CD8-positive, alpha-beta memory T cell (primary cell): ENCODE measurements at regions of chr4 and their contacts with region 1.

Region 1: DNA sequence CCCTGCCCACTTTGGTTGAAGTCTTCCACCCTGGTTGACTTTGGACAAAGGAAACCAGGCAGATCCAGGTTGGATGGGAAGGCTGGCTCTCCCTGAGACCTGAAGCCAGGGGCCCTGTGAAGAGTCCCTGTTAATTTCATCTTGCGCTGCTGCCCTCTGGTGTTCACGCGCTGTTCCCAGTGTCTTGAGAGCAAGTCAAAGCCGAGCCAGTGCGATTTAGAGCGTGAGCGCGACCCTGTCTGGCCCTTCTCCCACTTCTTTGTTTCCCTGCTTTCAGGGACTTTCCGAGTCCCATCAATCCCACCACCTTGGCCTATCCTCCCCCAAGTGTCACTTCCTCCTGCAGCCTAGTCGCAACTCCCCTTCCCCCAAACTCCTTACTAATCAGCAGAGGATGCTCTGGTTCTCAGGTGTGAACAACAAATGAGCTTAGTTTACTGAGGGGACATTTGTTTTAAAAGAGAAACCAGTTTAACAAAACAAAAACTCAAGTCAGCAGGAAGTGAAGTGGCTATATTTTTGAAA is 25.8 kb upstream of the CHRNA9 start:
- DNase-seq: peak; percentile 84 to 93 (median 87)
- H3K4me3 ChIP-seq: peak overlapping the region; percentile 46
- H3K4me3 Mint-ChIP-seq: peak overlapping the region; percentile 71 to 88 (median 81)
- H3K27ac ChIP-seq: peak overlapping the region; percentile 62
- H3K27ac Mint-ChIP-seq: peak overlapping the region; percentile 94 to 99 (median 98)
- H3K4me1 ChIP-seq: peaks cover 79% of the 10 kb centered on the region
- H3K4me1 Mint-ChIP-seq: peaks cover 57 to 85% (median 64%) of the 10 kb centered on the region in 3 donors
- H3K27me3 ChIP-seq: no peaks in the 10 kb centered on the region
- H3K27me3 Mint-ChIP-seq: peaks cover 0 to 2% of the 10 kb centered on the region in 2 donors

Region 2: DNA sequence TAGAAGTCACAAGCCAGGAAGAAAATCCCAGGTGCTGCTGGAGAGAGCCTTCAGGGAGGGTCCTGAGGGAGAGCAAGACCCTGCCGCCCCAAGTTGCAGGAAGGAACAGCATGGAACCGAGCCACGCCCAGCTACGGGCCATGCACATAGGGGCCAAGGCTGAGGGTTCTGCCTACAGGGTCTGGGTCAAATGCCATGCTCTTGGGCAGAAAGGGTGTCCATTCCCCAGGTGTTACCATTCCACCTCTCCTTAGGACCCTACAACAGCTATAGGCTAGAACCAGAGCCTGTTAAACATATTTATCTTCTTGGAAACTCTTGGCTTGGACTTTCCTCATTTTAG is 873.1 kb before region 1 on chr4:
- CTCF ChIA-PET with region 1: no interaction called
- POLR2A ChIA-PET with region 1: no interaction called
- DNase-seq: no peak
- H3K4me3 ChIP-seq: no peak overlapping the region
- H3K4me3 Mint-ChIP-seq: no peak overlapping the region
- H3K27ac ChIP-seq: no peak overlapping the region
- H3K27ac Mint-ChIP-seq: no peak overlapping the region
- H3K4me1 ChIP-seq: no peaks in the 10 kb centered on the region
- H3K4me1 Mint-ChIP-seq: no peaks in the 10 kb centered on the region
- H3K27me3 ChIP-seq: no peaks in the 10 kb centered on the region
- H3K27me3 Mint-ChIP-seq: peaks cover 0 to 5% of the 10 kb centered on the region in 2 donors

Region 3: DNA sequence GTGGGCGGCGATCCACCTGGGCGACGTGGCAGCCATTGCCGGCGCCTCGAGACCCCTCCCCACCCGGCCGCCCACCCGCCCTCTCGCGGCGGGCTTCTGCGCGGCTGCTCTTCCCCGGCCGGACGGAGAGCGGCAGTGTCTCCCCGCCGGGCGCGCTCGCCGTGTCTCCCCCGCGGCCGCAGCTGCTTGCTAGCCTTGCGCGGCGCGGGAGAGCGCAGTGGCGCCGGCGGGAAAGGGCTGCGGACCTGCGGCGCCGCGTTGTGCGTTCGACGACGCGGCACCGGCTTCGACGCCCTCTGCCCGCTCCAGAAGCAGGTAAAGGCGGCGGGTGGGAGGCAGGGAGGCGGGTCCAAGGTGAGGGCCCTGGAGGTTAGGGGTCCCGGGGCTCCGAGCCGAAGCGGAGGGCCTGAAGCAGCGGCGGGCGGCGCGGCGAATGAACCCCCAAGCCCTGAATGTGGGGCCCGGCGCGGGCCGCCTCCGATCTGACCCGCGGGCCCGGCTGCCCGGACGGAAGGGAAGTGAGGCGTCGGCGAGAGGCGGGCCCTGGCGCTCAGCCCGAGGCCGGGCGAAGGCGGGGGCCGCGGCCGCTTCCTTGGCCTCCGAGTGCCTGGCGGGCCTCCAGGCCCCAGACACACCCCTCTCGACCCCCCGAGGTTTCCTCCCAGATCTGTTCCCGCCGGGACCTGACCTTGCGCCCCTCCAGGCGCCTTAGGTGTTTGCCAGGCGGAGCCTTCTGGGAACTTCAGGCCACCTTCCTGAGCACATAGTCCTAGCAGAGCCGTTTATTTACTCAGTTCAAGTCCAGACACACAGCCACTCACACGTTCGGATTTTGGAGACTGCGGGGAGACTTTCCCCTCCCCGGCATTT is 252.4 kb before region 1 on chr4 and contains the start of gene N4BP2:
- CTCF ChIA-PET with region 1: interaction called, 12 read pairs
- POLR2A ChIA-PET with region 1: interaction called, 7 read pairs
- DNase-seq: peak; percentile 53 to 82 (median 69)
- H3K4me3 ChIP-seq: peak within 1 kb of the TSS; percentile 96
- H3K4me3 Mint-ChIP-seq: peak within 1 kb of the TSS; percentile 89 to 98 (median 95)
- H3K27ac ChIP-seq: peak within 1 kb of the TSS; percentile 83
- H3K27ac Mint-ChIP-seq: peak within 1 kb of the TSS; percentile 91 to 99 (median 96)
- H3K4me1 ChIP-seq: peaks cover 21% of the 10 kb centered on the region
- H3K4me1 Mint-ChIP-seq: peaks cover 27 to 39% (median 32%) of the 10 kb centered on the region in 3 donors
- H3K27me3 ChIP-seq: no peaks in the 10 kb centered on the region
- H3K27me3 Mint-ChIP-seq: no peaks in the 10 kb centered on the region
- total RNA-seq, gene N4BP2: 18.0 to 21.1 TPM

Region 4: DNA sequence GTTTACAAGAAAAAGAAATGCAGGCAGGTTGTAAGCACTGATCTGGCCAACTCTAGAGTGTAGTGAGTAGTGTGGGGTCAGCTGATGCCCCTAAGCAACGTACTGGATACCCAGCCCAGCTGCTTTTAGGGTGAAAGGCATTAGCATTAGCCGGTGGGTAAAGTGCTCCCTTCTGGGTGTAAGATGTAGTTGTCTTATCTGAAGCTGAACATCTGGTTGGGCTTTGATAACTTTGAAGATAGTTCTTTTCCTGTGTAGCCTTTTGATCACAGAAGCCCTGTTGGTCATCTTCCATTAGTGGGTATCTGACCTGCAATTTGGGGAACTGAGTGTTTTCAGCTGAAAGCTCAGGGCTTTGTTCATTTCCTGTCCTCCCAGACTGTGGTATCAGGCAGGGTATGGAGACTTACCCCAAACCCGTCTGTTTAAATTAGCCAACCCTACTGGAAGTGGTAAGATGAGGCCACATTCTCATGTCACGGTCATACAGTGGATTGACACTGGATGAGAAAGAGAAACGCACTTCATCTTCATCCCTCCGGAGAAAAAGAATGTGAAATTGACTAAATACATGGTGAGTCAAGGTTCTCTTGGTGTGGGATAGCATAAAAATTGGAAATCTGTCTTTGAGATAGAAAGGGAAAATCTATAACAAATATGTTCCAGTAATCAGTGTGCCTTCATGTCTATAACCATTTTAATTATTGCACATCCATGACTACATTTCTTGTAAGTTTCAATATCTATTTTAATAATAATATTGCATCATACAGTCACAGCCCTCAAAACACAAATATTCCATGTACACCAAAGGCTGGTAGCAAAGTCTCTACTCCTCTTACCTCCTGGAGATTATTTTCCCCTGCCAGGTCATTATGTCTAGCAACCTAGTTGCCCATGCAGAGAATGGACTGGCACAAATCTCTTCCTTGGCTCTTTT is 103.8 kb before region 1 on chr4:
- CTCF ChIA-PET with region 1: interaction called, 17 read pairs
- POLR2A ChIA-PET with region 1: interaction called, 13 read pairs
- DNase-seq: peak in 2 of 5 donors; percentile 30 to 47
- H3K4me3 ChIP-seq: peak overlapping the region; percentile 49
- H3K4me3 Mint-ChIP-seq: peak overlapping the region; percentile 90 to 100 (median 97)
- H3K27ac ChIP-seq: peak overlapping the region; percentile 72
- H3K27ac Mint-ChIP-seq: peak overlapping the region; percentile 84 to 100 (median 94)
- H3K4me1 ChIP-seq: peaks cover 66% of the 10 kb centered on the region
- H3K4me1 Mint-ChIP-seq: peaks cover 76 to 96% (median 80%) of the 10 kb centered on the region in 3 donors
- H3K27me3 ChIP-seq: no peaks in the 10 kb centered on the region
- H3K27me3 Mint-ChIP-seq: peaks cover 0 to 2% of the 10 kb centered on the region in 2 donors

Region 5: GRCh38 chr4:40238700-40239548 is 70.4 kb before region 1 on chr4:
- CTCF ChIA-PET with region 1: interaction called, 56 read pairs
- POLR2A ChIA-PET with region 1: interaction called, 13 read pairs
- DNase-seq: peak; percentile 59 to 93 (median 82)
- H3K4me3 ChIP-seq: peak overlapping the region; percentile 35
- H3K4me3 Mint-ChIP-seq: peak overlapping the region; percentile 70 to 94 (median 81)
- H3K27ac ChIP-seq: peak overlapping the region; percentile 91
- H3K27ac Mint-ChIP-seq: peak overlapping the region; percentile 94 to 100 (median 98)
- H3K4me1 ChIP-seq: peaks cover 96% of the 10 kb centered on the region
- H3K4me1 Mint-ChIP-seq: peaks cover 88 to 96% (median 96%) of the 10 kb centered on the region in 3 donors
- H3K27me3 ChIP-seq: no peaks in the 10 kb centered on the region
- H3K27me3 Mint-ChIP-seq: no peaks in the 10 kb centered on the region

Region 6: DNA sequence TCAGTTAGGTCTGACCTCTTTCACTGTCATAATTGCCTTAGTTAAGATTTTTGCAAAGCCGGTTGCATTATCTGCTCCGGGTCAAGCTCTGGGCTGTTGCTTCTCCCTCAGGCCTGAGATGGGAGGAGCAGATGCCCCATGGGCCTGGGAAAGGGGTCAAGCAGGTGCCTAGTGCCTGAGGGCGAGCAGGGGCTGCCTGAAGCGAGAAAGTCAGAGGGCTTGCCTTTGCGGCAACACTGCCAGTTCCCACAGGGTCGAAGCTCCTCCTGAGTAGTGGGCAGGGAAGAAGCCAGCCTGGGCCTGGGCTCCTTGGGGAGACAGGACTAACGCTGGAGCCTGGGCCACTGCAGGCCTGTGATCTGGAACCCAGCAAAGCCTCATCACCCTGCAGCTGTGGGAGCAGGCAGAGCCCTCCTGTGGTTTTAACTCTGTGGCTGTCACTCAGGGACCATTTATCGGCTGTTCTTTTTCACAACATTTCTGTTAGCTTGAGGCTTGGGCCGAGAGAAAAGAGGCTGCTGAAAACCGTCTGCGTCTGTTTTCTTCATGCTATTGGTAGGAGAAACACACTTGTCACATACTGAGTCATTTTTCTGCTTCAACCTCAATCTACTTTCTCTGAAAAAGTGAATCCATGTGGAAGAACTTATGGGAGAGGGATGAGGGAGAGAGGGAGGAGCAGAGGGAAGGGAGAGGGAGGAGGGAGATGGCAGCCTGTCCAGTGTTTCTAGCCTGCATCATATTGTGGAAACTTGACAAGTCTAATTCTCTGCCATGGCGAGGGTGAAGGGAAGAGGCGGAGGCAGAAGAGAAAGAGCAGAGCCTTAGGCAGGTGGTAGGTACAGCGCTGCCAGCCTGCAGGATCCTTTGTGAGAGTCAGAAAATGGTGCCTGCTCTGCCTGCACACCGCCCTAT is 44.1 kb before region 1 on chr4:
- CTCF ChIA-PET with region 1: interaction called, 11 read pairs
- POLR2A ChIA-PET with region 1: interaction called, 6 read pairs
- DNase-seq: peak; percentile 37 to 86 (median 67)
- H3K4me3 ChIP-seq: peak overlapping the region; percentile 55
- H3K4me3 Mint-ChIP-seq: peak overlapping the region; percentile 75 to 90 (median 81)
- H3K27ac ChIP-seq: peak overlapping the region; percentile 43
- H3K27ac Mint-ChIP-seq: peak overlapping the region; percentile 81 to 99 (median 97)
- H3K4me1 ChIP-seq: peaks cover 61% of the 10 kb centered on the region
- H3K4me1 Mint-ChIP-seq: peaks cover 41 to 76% (median 53%) of the 10 kb centered on the region in 3 donors
- H3K27me3 ChIP-seq: no peaks in the 10 kb centered on the region
- H3K27me3 Mint-ChIP-seq: no peaks in the 10 kb centered on the region

Region 7: DNA sequence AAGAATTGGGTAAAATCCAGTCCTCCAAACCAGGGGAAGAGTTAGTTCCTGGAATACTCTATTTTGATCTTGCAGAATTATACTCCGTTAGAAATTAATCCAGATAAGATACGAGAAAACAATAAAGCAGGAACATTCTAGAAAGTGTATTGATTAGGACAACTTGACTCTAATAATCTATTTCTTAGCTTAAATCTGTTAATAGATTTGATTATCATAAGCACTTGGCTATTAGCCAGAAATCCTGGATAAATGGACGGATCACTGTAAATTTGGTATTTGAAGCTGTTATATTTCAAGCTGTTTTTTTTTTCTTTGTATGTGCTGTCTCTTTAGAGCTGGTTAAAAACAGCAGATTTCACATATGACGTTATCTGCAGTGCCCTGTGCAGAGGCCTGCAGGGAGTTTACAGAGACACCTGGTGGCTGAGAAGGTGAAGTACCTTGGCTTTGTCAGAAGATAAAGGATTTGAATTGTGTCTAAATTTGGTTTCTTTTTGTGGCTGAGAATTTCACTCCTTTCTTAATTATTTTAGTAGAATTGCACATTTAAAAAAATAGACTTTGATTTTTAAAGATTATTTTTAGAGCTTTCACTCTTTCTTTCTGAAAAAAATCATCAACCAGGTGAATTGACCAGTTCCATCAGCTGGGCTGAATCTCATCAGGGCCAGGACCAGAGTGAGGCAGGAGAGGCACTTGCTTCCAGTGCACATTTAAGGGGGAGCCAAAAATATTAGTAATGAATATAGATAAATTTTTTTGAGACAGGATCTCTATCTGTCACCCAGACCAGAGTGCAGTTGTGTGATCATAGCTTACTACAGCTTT is 16.1 kb after region 1 on chr4:
- CTCF ChIA-PET with region 1: interaction called, 45 read pairs
- POLR2A ChIA-PET with region 1: interaction called, 5 read pairs
- DNase-seq: peak; percentile 38 to 84 (median 70)
- H3K4me3 ChIP-seq: no peak overlapping the region
- H3K4me3 Mint-ChIP-seq: no peak overlapping the region
- H3K27ac ChIP-seq: no peak overlapping the region
- H3K27ac Mint-ChIP-seq: peak overlapping the region in 6 of 8 donors; percentile 5 to 76 (median 61)
- H3K4me1 ChIP-seq: peaks cover 5% of the 10 kb centered on the region
- H3K4me1 Mint-ChIP-seq: peaks cover 6 to 7% (median 7%) of the 10 kb centered on the region in 3 donors
- H3K27me3 ChIP-seq: no peaks in the 10 kb centered on the region
- H3K27me3 Mint-ChIP-seq: peaks cover 1 to 8% of the 10 kb centered on the region in 2 donors